ENCODE measurements at regions of chr2 and their contacts with region 1.

Region 1: DNA sequence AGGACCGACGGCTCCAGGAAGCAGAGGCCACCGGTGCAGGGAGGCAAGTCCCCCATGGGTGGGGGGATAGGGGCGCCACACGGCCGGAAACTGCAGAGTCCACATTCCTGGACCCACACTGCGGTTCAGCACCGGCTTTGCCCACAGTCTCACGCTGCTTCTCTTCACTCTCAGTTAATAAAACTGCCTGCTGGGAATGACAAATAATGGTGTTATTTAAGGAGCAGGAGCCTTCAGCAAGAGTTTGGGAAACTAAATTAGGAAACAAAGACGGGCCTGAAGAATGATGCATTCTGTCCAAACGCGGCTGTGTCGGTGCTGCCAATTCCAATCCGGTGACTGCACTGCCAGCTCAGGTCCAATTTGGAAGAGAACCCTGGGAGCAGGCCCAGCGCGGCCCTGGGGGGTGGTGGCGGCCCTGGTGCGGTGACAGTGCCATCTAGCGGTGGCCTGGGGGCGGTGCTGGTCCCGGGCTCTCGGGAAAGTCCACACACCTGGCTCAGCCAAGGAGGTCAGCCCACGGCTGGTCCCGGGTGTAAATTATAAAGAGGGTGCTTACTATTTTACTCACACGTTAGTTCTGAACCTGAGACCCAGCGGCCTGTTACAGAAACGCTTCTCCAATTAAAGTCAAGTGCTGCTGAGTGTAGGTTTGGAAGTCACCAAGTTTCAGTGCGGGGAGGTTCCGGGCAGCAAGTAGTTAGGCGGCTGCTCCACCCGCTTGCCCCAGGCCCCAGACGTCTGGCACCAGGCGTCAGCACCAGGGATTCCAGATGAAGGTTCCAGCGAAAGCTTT is 73.1 kb upstream of the PXDN start:
- DNase-seq: peak; percentile 99
- H3K4me3 ChIP-seq: peak overlapping the region in 1 of 2 experiments; percentile 23; a peak in 1 of 4 replicates
- H3K27ac ChIP-seq: peak overlapping the region; percentile 36 to 86; a peak in 3 of 4 replicates
- H3K4me1 ChIP-seq: peaks cover 0 to 14% of the 10 kb centered on the region in 2 experiments; a peak in 1 of 4 replicates
- H3K27me3 ChIP-seq: no peaks in the 10 kb centered on the region
- CTCF ChIP-seq: peak; percentile 100
- EP300 ChIP-seq: peak in 1 of 2 experiments; percentile 73; a peak in 2 of 4 replicates
- RAD21 ChIP-seq: peak; percentile 76

Region 2: GRCh38 chr2:1591978-1592907 is 225.2 kb before region 1 on chr2:
- CTCF ChIA-PET with region 1: interaction called, 29 read pairs
- POLR2A ChIA-PET with region 1: no interaction called
- DNase-seq: peak; percentile 83
- H3K4me3 ChIP-seq: no peak overlapping the region
- H3K27ac ChIP-seq: no peak overlapping the region
- H3K4me1 ChIP-seq: peaks cover 14 to 44% of the 10 kb centered on the region in 2 experiments; a peak in 2 of 4 replicates
- H3K27me3 ChIP-seq: no peaks in the 10 kb centered on the region
- CTCF ChIP-seq: peak; percentile 50
- EP300 ChIP-seq: 0 out of 4 replicates have a peak, but pooled peaks of 1 of the 2 experiments have one; percentile 8
- RAD21 ChIP-seq: peak; percentile 75

Region 3: GRCh38 chr2:1802469-1803216 is 14.8 kb before region 1 on chr2:
- CTCF ChIA-PET with region 1: interaction called, 76 read pairs
- POLR2A ChIA-PET with region 1: no interaction called
- DNase-seq: no peak
- H3K4me3 ChIP-seq: no peak overlapping the region
- H3K27ac ChIP-seq: no peak overlapping the region; a peak in 1 of 4 replicates
- H3K4me1 ChIP-seq: peaks cover 0 to 5% of the 10 kb centered on the region in 2 experiments; a peak in 1 of 4 replicates
- H3K27me3 ChIP-seq: no peaks in the 10 kb centered on the region
- CTCF ChIP-seq: no peak
- EP300 ChIP-seq: no peak
- RAD21 ChIP-seq: no peak

Region 4: DNA sequence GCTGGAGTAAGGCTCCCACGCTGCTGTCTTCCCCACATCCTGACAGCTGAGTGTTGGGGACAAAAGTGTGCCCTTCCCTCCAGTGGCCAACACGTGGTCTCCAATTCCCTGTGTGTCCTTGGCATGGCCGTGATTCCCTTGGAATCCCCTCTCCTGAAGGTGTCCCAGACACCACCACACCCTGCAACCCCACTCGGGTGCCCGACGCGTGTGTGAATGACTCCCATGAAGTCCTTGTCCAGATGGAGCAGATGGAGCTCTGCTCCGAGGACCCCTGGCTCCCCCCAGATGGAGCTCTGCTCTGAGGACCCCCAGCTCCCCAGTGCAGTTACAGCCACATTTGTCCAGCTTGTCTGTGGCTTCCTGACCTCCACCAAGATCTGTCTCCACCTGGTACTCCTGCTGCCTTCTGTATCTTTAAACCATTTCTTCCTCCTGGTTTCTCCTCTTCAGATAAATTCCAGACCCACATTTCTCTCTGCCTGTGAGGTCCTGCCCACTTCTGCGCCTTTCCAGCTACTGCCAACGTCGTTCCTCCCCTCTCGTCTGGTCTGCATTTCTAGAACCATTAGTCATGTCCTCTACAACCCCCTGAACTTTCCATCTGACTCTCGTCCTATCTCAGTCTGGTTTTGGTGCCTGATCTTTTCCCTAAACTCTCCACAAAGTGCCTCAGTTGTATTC is 13.6 kb after region 1 on chr2:
- CTCF ChIA-PET with region 1: interaction called, 82 read pairs
- POLR2A ChIA-PET with region 1: interaction called, 5 read pairs
- DNase-seq: no peak
- H3K4me3 ChIP-seq: no peak overlapping the region
- H3K27ac ChIP-seq: no peak overlapping the region
- H3K4me1 ChIP-seq: peaks cover 0 to 6% of the 10 kb centered on the region in 2 experiments; a peak in 1 of 4 replicates
- H3K27me3 ChIP-seq: no peaks in the 10 kb centered on the region
- CTCF ChIP-seq: no peak
- EP300 ChIP-seq: no peak
- RAD21 ChIP-seq: no peak

Region 5: DNA sequence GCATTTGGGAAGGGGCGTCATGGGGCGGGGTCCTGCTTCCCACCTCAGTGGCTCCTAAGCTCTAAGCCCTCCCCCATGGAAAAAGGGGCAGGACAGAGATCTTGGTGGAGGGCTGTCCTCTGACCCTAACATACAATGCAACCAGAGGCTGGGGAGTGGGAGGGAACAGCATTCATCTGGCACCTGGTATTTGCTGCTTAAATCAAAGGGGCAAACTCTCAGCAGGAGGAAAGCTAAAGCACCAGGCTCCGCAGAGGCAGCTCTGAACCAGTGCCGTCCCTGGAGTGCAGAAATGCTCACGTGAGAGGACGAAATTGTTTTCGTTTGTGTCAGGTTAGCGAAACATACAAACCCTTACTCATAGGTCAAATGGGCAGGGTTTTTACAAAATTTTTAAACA is 19.6 kb after region 1 on chr2:
- CTCF ChIA-PET with region 1: interaction called, 82 read pairs
- POLR2A ChIA-PET with region 1: interaction called, 5 read pairs
- DNase-seq: no peak
- H3K4me3 ChIP-seq: no peak overlapping the region
- H3K27ac ChIP-seq: no peak overlapping the region
- H3K4me1 ChIP-seq: no peaks in the 10 kb centered on the region
- H3K27me3 ChIP-seq: no peaks in the 10 kb centered on the region; the same call in 1 of the 2 replicates
- CTCF ChIP-seq: no peak
- EP300 ChIP-seq: no peak
- RAD21 ChIP-seq: no peak

Region 6: DNA sequence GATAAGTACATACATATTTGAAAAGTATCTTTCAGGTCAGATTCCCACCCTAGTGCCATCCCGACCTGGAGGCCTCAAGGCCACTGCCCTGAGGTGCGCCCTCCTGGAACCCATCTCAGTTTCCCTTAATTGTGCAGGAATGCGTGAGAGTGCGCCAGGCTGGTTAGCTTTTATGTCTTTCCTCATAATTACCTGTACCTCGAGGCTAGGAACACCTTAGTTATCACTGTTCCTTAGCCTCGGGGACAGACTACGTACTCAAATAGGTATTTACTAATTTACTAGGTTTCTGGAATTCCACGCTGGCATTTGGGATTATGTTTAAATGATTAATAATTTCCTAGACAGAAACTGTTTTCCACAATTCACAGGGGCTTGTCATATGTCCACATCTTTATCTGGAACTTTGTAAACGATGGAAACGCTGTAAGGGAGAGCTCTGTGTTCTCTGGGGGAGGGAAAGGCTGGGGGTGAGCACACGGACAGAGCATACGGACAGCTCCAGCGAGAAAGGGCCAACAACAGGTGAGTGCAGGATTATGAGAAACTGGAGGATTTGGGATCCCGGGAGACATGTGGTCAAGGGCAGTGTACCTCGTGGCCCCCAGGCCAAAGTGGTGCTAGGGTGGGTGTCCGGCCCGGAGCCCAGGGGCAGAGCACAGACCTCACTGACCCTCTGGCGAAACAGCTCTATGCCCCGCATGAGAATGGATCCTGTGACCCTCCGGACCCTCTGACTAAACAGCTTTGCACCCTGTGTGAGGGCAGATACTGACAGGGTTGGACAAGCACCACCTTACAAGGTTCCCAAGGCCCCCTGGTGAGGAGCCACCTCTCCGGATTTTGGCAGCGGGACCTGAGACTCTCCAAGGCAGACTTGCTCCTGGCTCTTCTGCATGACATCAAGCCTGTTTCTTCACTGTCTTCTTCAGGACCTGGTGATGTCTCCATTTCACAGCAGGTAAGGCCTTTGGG is 28.9 kb after region 1 on chr2:
- CTCF ChIA-PET with region 1: interaction called, 10 read pairs
- POLR2A ChIA-PET with region 1: no interaction called
- DNase-seq: no peak
- H3K4me3 ChIP-seq: no peak overlapping the region
- H3K27ac ChIP-seq: no peak overlapping the region
- H3K4me1 ChIP-seq: peaks cover 0 to 3% of the 10 kb centered on the region in 2 experiments; a peak in 1 of 4 replicates
- H3K27me3 ChIP-seq: peaks cover 37% of the 10 kb centered on the region
- CTCF ChIP-seq: no peak
- EP300 ChIP-seq: no peak
- RAD21 ChIP-seq: no peak

Region 7: DNA sequence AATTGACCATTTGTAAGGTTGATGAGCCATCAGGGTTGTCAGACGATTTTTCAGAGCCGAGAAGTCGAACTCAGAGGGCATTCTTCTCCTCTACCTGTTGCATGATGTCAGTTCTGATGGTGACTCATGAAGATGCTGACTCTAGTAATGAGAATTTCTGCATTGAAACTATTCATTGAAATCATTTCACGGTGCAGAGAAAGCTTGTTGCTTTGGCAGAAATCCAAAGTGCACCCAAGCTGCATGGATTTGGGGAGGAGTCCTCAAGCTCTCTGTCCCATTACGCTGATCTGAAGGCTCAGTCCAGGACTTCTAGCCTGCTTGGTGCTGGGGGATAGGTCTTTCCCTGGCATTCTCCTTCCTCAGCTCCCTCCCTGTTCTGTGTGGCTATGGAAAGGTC is 52.5 kb after region 1 on chr2:
- CTCF ChIA-PET with region 1: no interaction called
- POLR2A ChIA-PET with region 1: no interaction called
- DNase-seq: no peak
- H3K4me3 ChIP-seq: no peak overlapping the region
- H3K27ac ChIP-seq: no peak overlapping the region
- H3K4me1 ChIP-seq: peaks cover 0 to 52% of the 10 kb centered on the region in 2 experiments; a peak in 3 of 4 replicates
- H3K27me3 ChIP-seq: no peaks in the 10 kb centered on the region; the same call in 1 of the 2 replicates
- CTCF ChIP-seq: no peak
- EP300 ChIP-seq: no peak
- RAD21 ChIP-seq: no peak

Measured in SK-N-SH (cell line).